ENCODE measurements at regions of chr5 and their contacts with region 1.

Region 1: GRCh38 chr5:102971697-102972293 is 148.1 kb downstream of the GIN1 start:
- DNase-seq: no peak
- ATAC-seq: peak in 2 of 4 donors; percentile 52 to 53
- H3K4me3 ChIP-seq: no peak overlapping the region
- H3K27ac ChIP-seq: no peak overlapping the region
- H3K4me1 ChIP-seq: peaks cover 0 to 16% (median 5%) of the 10 kb centered on the region in 12 donors
- H3K27me3 ChIP-seq: no peaks in the 10 kb centered on the region
- CTCF ChIP-seq: peak in 11 of 12 donors; percentile 27 to 62 (median 46)
- POLR2A ChIP-seq: no peak

Region 2: GRCh38 chr5:102681407-102681983 is 290.3 kb before region 1 on chr5:
- intact Hi-C with region 1: loop called in 5 of 10 experiments (anchors 5 to 10 kb)
- DNase-seq: peak; percentile 62 to 75 (median 71)
- ATAC-seq: peak in 3 of 4 donors; percentile 84 to 88 (median 87)
- H3K4me3 ChIP-seq: no peak overlapping the region
- H3K27ac ChIP-seq: no peak overlapping the region
- H3K4me1 ChIP-seq: no peaks in the 10 kb centered on the region
- H3K27me3 ChIP-seq: no peaks in the 10 kb centered on the region
- CTCF ChIP-seq: peak; percentile 59 to 91 (median 82)
- POLR2A ChIP-seq: no peak